RWPE1 (cell line): ENCODE measurements at regions of chr9 and their contacts with region 1.

Region 1: DNA sequence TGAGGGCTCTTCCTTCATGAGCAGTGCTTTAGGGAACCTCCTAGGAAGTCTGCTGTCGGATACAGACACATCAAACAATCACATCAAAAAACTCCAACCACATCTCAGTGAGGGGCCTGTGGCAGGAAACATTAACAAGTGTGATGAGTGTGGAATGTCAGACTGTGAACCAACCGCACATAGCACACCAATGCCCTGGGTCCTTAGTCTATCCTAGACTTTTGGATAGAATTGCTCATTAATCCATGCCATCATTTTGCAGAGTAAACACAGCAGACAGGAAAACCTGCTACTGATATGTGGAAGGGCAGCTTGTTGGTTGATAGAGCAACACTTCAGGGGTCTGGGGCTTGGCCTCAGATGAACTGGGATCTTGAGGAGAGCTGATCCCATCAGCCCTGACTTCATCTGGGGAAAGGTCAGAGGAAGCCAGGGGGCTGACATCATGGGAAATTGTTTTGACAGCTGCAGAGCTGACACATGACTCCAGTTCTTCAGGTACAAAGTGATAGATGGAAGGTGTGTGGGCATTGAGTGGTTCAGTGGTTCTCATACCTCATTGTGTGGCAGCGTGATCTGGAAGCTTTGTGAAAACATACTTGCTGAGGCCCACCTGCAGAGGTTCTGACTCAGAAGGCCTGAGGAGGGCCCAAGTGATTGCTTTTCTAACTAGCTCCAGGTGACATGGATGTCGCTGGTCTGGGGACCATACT is 193.3 kb downstream of the DIRAS2 start:
- DNase-seq: no peak
- H3K27ac ChIP-seq: no peak overlapping the region
- CTCF ChIP-seq: no peak

Region 2: DNA sequence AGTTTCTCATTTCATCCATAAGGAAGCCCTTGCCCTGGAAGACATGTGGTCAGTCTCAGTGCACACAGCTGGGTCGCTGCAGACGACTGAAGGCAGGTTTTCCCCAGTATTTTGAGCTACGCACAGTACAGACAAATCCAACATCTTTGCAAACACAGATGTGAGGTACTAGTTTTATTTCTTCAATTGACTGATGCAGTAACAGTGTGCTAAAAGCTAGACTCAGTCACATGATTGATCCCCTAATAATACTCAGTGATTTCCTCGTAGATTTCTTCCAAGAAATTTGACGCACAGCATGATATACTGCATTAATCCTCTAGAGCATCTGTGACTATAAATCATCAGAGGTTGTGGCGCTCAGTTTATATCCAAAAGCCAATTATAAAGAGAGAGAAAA is 152.8 kb before region 1 on chr9:
- CTCF ChIA-PET with region 1: no interaction called
- POLR2A ChIA-PET with region 1: interaction called, 11 read pairs
- DNase-seq: no peak
- H3K27ac ChIP-seq: no peak overlapping the region
- CTCF ChIP-seq: no peak

Region 3: DNA sequence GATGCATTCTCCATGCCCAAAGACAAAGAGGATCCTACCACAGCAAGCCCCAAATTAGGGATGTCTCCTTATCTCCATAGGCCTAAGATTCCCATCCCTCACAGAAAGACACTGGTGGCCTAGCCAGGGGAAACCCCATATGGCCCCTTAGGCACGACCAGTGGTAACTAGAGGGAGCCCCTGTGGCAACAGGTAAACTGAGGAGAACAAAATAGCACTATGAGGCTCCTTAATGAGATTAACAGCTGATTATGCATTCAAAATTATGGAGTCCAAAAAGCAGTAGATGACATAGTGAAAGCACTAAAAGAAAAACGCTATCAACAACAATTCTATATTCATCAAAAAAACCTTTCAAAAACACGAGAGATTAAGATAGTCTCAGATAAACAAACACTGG is 40.7 kb before region 1 on chr9:
- CTCF ChIA-PET with region 1: no interaction called
- POLR2A ChIA-PET with region 1: no interaction called
- DNase-seq: no peak
- H3K27ac ChIP-seq: no peak overlapping the region
- CTCF ChIP-seq: no peak

Region 4: GRCh38 chr9:90827181-90827871 is 378.0 kb after region 1 on chr9:
- CTCF ChIA-PET with region 1: no interaction called
- POLR2A ChIA-PET with region 1: no interaction called
- DNase-seq: no peak
- H3K27ac ChIP-seq: no peak overlapping the region
- CTCF ChIP-seq: no peak